K562 (cell line): ENCODE measurements at regions of chr2 and their contacts with region 1.

Region 1: GRCh38 chr2:215920244-215921100 is 92.9 kb downstream of the MREG start:
- DNase-seq: peak; percentile 37 to 71 (median 38)
- ATAC-seq: peak; percentile 99
- H3K4me3 ChIP-seq: no peak overlapping the region
- H3K27ac ChIP-seq: no peak overlapping the region
- H3K4me1 ChIP-seq: no peaks in the 10 kb centered on the region; a peak in 1 of 5 replicates
- H3K27me3 ChIP-seq: no peaks in the 10 kb centered on the region
- CTCF ChIP-seq: peak; percentile 74 to 79 (median 76)
- EP300 ChIP-seq: no peak
- POLR2A ChIP-seq: no peak
- RAD21 ChIP-seq: peak; percentile 90 to 91

Region 2: GRCh38 chr2:214960677-214961076 is 959.8 kb before region 1 on chr2:
- CTCF ChIA-PET with region 1: no interaction called
- POLR2A ChIA-PET with region 1: no interaction called
- in situ Hi-C with region 1: no loop called
- intact Hi-C with region 1: loop called (anchors 5 kb)
- DNase-seq: no peak
- ATAC-seq: no peak
- H3K4me3 ChIP-seq: no peak overlapping the region
- H3K27ac ChIP-seq: no peak overlapping the region
- H3K4me1 ChIP-seq: no peaks in the 10 kb centered on the region
- H3K27me3 ChIP-seq: no peaks in the 10 kb centered on the region
- CTCF ChIP-seq: peak in 1 of 3 experiments; percentile 18; a peak in 2 of 6 replicates
- EP300 ChIP-seq: no peak
- POLR2A ChIP-seq: no peak
- RAD21 ChIP-seq: peak; percentile 8 to 35; a peak in 2 of 4 replicates

Region 3: DNA sequence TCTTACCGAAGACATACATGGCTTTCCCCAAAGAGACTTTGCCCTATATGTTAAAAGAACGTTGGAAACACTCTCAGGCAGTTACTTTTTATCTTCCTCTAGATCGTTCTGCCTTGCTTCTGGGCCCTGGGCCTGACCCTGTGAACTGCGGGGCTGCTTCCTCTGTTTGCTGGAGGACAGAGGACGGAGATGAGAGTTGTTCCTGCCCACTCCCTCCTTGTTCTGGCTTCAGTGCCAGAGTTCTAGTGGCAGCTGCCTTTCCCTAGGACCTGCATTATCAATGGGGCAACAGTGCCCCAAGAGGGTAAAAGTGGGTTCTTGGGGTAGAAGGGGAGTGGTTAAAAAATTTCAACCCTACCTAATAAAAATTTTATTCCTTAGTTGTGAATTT is 478.1 kb before region 1 on chr2:
- CTCF ChIA-PET with region 1: no interaction called
- POLR2A ChIA-PET with region 1: no interaction called
- in situ Hi-C with region 1: no loop called
- intact Hi-C with region 1: loop called (anchors 5 kb)
- DNase-seq: peak in 2 of 4 experiments; percentile 13 to 48
- ATAC-seq: peak; percentile 82
- H3K4me3 ChIP-seq: no peak overlapping the region
- H3K27ac ChIP-seq: peak overlapping the region; percentile 61; the same call in 1 of the 3 replicates
- H3K4me1 ChIP-seq: peaks cover 0 to 9% of the 10 kb centered on the region in 2 experiments; a peak in 3 of 5 replicates
- H3K27me3 ChIP-seq: no peaks in the 10 kb centered on the region
- CTCF ChIP-seq: peak in 1 of 3 experiments; percentile 10; a peak in 1 of 6 replicates
- EP300 ChIP-seq: no peak; the same call in 1 of the 2 replicates
- POLR2A ChIP-seq: no peak
- RAD21 ChIP-seq: no peak

Region 4: GRCh38 chr2:215454519-215455246 is 465.8 kb before region 1 on chr2:
- CTCF ChIA-PET with region 1: no interaction called
- POLR2A ChIA-PET with region 1: no interaction called
- in situ Hi-C with region 1: loop called (anchors 10 kb)
- intact Hi-C with region 1: loop called (anchors 1 kb)
- DNase-seq: peak; percentile 32 to 45 (median 44)
- ATAC-seq: peak; percentile 67
- H3K4me3 ChIP-seq: no peak overlapping the region
- H3K27ac ChIP-seq: no peak overlapping the region
- H3K4me1 ChIP-seq: no peaks in the 10 kb centered on the region
- H3K27me3 ChIP-seq: no peaks in the 10 kb centered on the region
- CTCF ChIP-seq: peak; percentile 45 to 72 (median 64); a peak in 5 of 6 replicates
- EP300 ChIP-seq: no peak
- POLR2A ChIP-seq: no peak
- RAD21 ChIP-seq: peak; percentile 74 to 79

Region 5: DNA sequence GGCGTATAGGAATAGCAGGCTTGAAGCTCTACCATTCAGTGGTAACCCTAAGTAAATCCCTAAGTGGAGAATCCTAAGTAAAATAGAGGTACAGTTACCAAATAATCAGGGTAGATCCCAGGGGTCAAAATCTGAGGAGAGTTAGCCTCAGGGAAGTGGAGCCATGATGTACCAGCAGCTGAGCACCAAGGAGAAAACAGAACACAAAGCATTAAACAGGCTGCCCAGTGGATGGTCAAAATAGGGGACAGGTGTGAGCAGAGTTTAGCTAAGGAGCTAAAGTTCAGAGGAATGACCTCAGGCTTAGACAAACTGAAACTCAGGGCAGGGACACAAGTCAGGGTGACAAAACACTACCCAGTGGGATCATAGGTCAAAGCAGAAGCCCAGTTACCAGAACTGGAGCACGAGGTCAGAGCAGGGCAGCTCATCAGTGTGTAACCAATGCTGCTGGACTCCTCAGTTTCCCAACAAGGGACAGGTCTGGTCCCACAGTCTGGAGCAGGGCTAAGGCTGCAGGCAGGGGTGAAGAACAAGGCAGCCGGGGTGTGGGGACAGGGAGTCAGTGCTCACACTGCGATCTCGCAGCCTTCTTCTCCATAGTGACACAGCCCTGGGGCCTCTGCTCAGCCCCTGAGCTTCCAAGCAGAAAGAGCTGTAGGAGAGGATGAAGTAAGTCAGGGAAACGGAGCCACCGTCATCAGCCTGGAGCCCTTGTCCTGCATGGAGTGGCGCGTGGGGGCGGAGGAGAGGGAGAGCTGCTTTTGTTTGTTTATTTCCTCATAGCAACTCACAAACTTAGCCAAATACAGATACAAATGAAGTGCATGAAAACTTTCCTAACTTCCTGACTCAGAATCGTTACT is 171.1 kb before region 1 on chr2:
- CTCF ChIA-PET with region 1: no interaction called
- POLR2A ChIA-PET with region 1: no interaction called
- in situ Hi-C with region 1: no loop called
- intact Hi-C with region 1: no loop called
- DNase-seq: no peak
- ATAC-seq: peak; percentile 46; the same call in 2 of the 3 replicates
- H3K4me3 ChIP-seq: no peak overlapping the region
- H3K27ac ChIP-seq: no peak overlapping the region
- H3K4me1 ChIP-seq: 0 out of 5 replicates have a peak, but pooled peaks cover 0 to 5% of the 10 kb centered on the region in 2 experiments
- H3K27me3 ChIP-seq: no peaks in the 10 kb centered on the region
- CTCF ChIP-seq: no peak
- EP300 ChIP-seq: no peak
- POLR2A ChIP-seq: no peak
- RAD21 ChIP-seq: no peak

Region 6: GRCh38 chr2:215793747-215794595 is 126.5 kb before region 1 on chr2:
- CTCF ChIA-PET with region 1: no interaction called
- POLR2A ChIA-PET with region 1: no interaction called
- in situ Hi-C with region 1: no loop called
- intact Hi-C with region 1: loop called (anchors 10 kb)
- DNase-seq: peak; percentile 20 to 93 (median 47)
- ATAC-seq: peak; percentile 83
- H3K4me3 ChIP-seq: no peak overlapping the region
- H3K27ac ChIP-seq: peak overlapping the region; percentile 85
- H3K4me1 ChIP-seq: peaks cover 5 to 49% of the 10 kb centered on the region in 2 experiments; a peak in 4 of 5 replicates
- H3K27me3 ChIP-seq: no peaks in the 10 kb centered on the region
- CTCF ChIP-seq: no peak
- EP300 ChIP-seq: peak; percentile 89
- POLR2A ChIP-seq: no peak
- RAD21 ChIP-seq: 0 out of 4 replicates have a peak, but pooled peaks of 1 of the 2 experiments have one; percentile 16

Region 7: GRCh38 chr2:217459680-217460405 is 1539.4 kb after region 1 on chr2:
- CTCF ChIA-PET with region 1: no interaction called
- POLR2A ChIA-PET with region 1: no interaction called
- in situ Hi-C with region 1: no loop called
- intact Hi-C with region 1: no loop called
- DNase-seq: no peak
- ATAC-seq: no peak
- H3K4me3 ChIP-seq: no peak overlapping the region
- H3K27ac ChIP-seq: no peak overlapping the region
- H3K4me1 ChIP-seq: no peaks in the 10 kb centered on the region
- H3K27me3 ChIP-seq: no peaks in the 10 kb centered on the region
- CTCF ChIP-seq: no peak
- EP300 ChIP-seq: no peak
- POLR2A ChIP-seq: no peak
- RAD21 ChIP-seq: no peak